Dorsolateral prefrontal cortex (tissue), 120 donors: ENCODE measurements at regions of chr11 and their contacts with region 1.

Region 1: GRCh38 chr11:66616379-66617154 is at the start of gene RBM14:
- DNase-seq: peak; percentile 95 to 99 (median 98)
- H3K4me3 ChIP-seq: peak within 1 kb of the TSS; percentile 68 to 100 (median 93)
- H3K27ac ChIP-seq: peak within 1 kb of the TSS; percentile 79 to 99 (median 94)
- H3K27me3 ChIP-seq: no peaks in the 10 kb centered on the region
- CTCF ChIP-seq: peak in 8 of 56 donors; percentile 4 to 39 (median 22)
- total RNA-seq, gene RBM14: 62.9 to 242 (median 100) TPM

Region 2: GRCh38 chr11:66579017-66579606 is 37.5 kb before region 1 on chr11:
- intact Hi-C with region 1: loop called in 1 of 2 experiments (anchors 5 kb)
- DNase-seq: peak; percentile 70 to 86 (median 80)
- H3K4me3 ChIP-seq: peak overlapping the region in 20 of 59 donors; percentile 1 to 39 (median 21)
- H3K27ac ChIP-seq: peak overlapping the region in 8 of 59 donors; percentile 0 to 74 (median 13)
- H3K27me3 ChIP-seq: no peaks in the 10 kb centered on the region
- CTCF ChIP-seq: peak; percentile 46 to 93 (median 84)

Region 3: DNA sequence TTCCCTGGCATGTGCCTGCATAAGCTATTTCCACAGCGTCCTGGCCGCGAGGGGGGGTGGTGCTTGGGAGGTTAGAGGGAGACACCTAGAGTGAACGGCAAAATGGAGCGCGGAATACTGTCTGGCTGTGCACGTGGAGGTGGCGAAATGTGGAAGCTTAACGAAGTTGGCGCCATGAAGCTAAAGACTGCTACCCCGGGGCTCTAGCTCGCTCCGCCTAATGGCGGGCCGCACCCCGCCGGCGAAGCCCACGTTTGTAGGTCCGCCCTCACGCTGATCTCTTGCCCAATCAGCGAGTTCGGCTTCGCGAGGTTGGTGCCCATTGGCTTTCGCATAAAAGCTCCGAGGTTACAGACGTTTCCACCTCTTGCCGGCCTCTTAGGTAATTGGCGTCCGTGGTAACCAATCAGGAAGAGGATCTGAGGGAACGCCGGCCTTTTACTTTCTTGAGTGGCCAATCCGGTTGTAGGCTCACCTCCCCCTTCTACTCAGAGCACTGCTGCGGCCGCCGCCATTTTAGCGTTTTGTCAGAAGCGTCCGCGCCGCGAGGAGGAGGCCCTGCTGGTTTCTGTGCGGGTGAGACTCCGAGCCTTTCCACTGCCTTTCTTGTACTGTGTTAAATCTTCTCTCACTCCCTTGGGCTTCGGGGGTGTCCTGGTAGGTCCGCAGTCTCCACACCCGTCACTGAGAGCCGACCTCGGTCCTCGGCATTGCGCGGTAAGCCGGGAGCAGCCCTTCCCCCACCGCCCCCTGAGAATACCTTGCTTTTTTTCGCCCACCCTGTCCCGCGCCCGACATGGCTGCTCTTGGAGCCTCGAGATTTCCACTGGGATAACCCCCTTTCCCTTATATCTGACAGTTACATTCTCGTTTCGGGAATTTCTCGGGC is 21.9 kb after region 1 on chr11 and contains the start of gene RBM4:
- intact Hi-C with region 1: loop called (anchors 1 kb)
- DNase-seq: peak; percentile 97 to 100 (median 99)
- H3K4me3 ChIP-seq: peak within 1 kb of the TSS; percentile 52 to 97 (median 81)
- H3K27ac ChIP-seq: peak within 1 kb of the TSS; percentile 52 to 97 (median 88)
- H3K27me3 ChIP-seq: no peaks in the 10 kb centered on the region
- CTCF ChIP-seq: peak in 32 of 56 donors; percentile 7 to 50 (median 24)
- total RNA-seq, gene RBM4: 72.2 to 164 (median 105) TPM